Naive thymus-derived CD4-positive, alpha-beta T cell (primary cell): ENCODE measurements at regions of chr22 and their contacts with region 1.

Region 1: GRCh38 chr22:44684506-44685383 is 17.3 kb upstream of the PRR5 start:
- DNase-seq: peak; percentile 58 to 84 (median 78)
- ATAC-seq: peak; percentile 95
- H3K4me3 ChIP-seq: no peak overlapping the region
- H3K4me3 Mint-ChIP-seq: peak overlapping the region in 8 of 10 donors; percentile 36 to 76 (median 52)
- H3K27ac ChIP-seq: no peak overlapping the region
- H3K27ac Mint-ChIP-seq: peak overlapping the region in 8 of 9 donors; percentile 43 to 84 (median 67)
- H3K4me1 ChIP-seq: peaks cover 16 to 39% of the 10 kb centered on the region in 2 donors
- H3K4me1 Mint-ChIP-seq: peaks cover 20 to 55% (median 37%) of the 10 kb centered on the region in 7 donors
- H3K27me3 ChIP-seq: no peaks in the 10 kb centered on the region
- H3K27me3 Mint-ChIP-seq: no peaks in the 10 kb centered on the region

Region 2: GRCh38 chr22:43993027-43993760 is 691.6 kb before region 1 on chr22:
- CTCF ChIA-PET with region 1: no interaction called
- POLR2A ChIA-PET with region 1: no interaction called
- intact Hi-C with region 1: loop called in 1 of 2 experiments (anchors 10 kb)
- DNase-seq: peak; percentile 14 to 60 (median 52)
- ATAC-seq: peak; percentile 84
- H3K4me3 ChIP-seq: no peak overlapping the region
- H3K4me3 Mint-ChIP-seq: peak overlapping the region in 2 of 10 donors; percentile 42 to 54
- H3K27ac ChIP-seq: no peak overlapping the region
- H3K27ac Mint-ChIP-seq: peak overlapping the region in 7 of 9 donors; percentile 22 to 93 (median 68)
- H3K4me1 ChIP-seq: peaks cover 0 to 6% of the 10 kb centered on the region in 2 donors
- H3K4me1 Mint-ChIP-seq: peaks cover 26 to 42% (median 33%) of the 10 kb centered on the region in 7 donors
- H3K27me3 ChIP-seq: no peaks in the 10 kb centered on the region
- H3K27me3 Mint-ChIP-seq: no peaks in the 10 kb centered on the region

Region 3: DNA sequence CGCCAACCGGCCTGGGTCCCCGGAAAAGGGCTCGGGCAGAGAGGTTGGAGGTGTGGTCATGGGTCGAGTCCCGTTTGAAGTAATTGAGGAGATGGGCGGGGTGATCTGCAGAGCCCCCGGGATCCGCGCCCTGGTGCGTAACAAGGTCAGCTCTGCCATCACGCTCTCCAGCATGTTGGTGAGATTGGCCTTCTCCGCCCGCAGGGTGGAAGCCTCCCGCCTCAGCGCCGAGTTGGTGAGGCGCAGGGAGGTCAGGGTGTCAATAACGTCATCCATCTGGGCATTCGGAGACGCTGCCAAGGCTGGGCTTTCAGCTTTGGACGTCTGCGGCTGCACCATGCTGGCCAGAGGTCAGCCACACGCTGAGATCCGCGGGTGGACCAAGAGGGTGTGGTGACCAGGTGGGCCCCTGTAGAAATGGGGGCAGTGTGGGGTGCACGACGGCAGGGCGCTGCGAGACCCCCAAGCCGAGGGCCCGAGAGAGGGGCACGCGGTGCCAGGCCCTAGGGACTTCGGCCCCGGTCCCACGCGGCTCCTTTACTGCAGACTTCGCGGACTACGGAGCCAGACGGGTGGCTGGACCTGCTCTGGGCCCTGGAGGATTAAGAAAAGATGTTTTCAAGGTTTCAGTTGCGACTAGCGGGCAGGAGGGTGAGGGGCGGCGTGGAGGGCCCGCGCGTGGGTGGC is 187.4 kb before region 1 on chr22:
- CTCF ChIA-PET with region 1: no interaction called
- POLR2A ChIA-PET with region 1: no interaction called
- intact Hi-C with region 1: loop called in 1 of 2 experiments (anchors 5 kb)
- DNase-seq: peak in 2 of 9 donors; percentile 8 to 11
- ATAC-seq: no peak
- H3K4me3 ChIP-seq: peak overlapping the region; percentile 61
- H3K4me3 Mint-ChIP-seq: peak overlapping the region; percentile 42 to 89 (median 72)
- H3K27ac ChIP-seq: peak overlapping the region; percentile 80
- H3K27ac Mint-ChIP-seq: peak overlapping the region; percentile 15 to 91 (median 73)
- H3K4me1 ChIP-seq: peaks cover 4 to 28% of the 10 kb centered on the region in 2 donors
- H3K4me1 Mint-ChIP-seq: peaks cover 5 to 47% (median 29%) of the 10 kb centered on the region in 7 donors
- H3K27me3 ChIP-seq: no peaks in the 10 kb centered on the region
- H3K27me3 Mint-ChIP-seq: peaks cover 0 to 9% (median 5%) of the 10 kb centered on the region in 5 donors

Region 4: DNA sequence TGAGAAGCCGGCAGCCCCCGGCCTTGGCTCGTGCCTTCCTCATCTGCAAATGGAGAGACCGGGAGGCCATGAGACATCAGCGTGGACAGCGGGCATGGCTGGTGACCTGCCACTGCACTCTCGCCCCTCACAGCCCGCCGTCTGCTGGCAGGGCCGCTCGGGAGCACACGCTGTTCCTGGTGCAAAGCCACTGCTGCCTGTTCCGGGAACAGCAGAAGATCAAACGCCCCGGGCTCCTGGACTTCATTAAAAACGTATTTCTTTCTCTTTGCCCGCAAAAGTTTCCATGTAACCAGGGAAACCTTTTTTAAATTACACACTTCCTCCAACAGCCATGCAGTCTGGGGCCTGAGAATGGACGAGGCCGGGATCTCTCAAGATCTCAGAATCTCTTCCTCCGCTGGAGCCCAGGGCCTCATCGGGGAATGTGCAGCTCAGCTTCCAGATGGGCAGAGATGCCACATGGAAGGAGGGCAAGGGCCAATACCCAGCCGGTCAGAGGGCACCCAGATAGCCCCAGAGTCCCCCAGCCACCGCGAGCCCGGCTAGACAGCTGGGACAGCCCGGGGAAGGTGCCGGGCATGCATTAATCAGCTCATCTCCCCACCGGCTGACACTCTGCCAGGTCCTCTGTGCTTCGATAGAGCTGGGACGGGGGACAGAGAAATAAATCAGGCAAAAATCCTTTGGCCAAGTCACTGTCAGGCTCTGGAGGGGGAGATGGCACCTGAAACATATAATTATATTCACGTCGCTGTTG is 45.6 kb before region 1 on chr22:
- CTCF ChIA-PET with region 1: no interaction called
- POLR2A ChIA-PET with region 1: no interaction called
- intact Hi-C with region 1: no loop called
- DNase-seq: no peak
- ATAC-seq: no peak
- H3K4me3 ChIP-seq: no peak overlapping the region
- H3K4me3 Mint-ChIP-seq: no peak overlapping the region
- H3K27ac ChIP-seq: no peak overlapping the region
- H3K27ac Mint-ChIP-seq: no peak overlapping the region
- H3K4me1 ChIP-seq: peaks cover 0 to 8% of the 10 kb centered on the region in 2 donors
- H3K4me1 Mint-ChIP-seq: peaks cover 0 to 7% (median 0%) of the 10 kb centered on the region in 7 donors
- H3K27me3 ChIP-seq: no peaks in the 10 kb centered on the region
- H3K27me3 Mint-ChIP-seq: peaks cover 0 to 6% (median 0%) of the 10 kb centered on the region in 5 donors

Region 5: DNA sequence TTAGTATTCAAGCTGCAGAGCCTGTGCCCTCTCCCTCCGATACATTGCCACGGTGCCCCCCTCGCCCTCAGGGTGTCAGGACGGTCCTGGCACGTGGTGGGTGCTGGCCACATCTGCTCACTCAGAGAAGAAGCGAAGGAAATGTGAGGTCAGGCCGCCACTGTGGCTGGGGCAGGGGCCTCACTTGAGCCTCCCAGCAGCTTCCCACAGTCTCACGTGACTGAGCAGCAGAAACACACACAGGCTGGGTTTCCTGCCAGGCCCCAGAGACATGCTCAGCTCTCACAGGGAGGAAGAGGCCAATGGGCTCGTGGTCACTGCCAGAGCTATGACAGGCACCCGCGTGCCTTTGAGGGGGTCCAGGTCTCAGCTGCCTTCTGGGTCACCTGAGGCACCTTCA is 20.6 kb before region 1 on chr22:
- CTCF ChIA-PET with region 1: interaction called, 10 read pairs
- POLR2A ChIA-PET with region 1: interaction called, 7 read pairs
- intact Hi-C with region 1: loop called (anchors 1 kb)
- DNase-seq: peak in 6 of 9 donors; percentile 27 to 49 (median 34)
- ATAC-seq: peak; percentile 58
- H3K4me3 ChIP-seq: peak overlapping the region; percentile 30
- H3K4me3 Mint-ChIP-seq: peak overlapping the region; percentile 33 to 77 (median 56)
- H3K27ac ChIP-seq: peak overlapping the region; percentile 61
- H3K27ac Mint-ChIP-seq: peak overlapping the region; percentile 68 to 91 (median 83)
- H3K4me1 ChIP-seq: peaks cover 43 to 46% of the 10 kb centered on the region in 2 donors
- H3K4me1 Mint-ChIP-seq: peaks cover 37 to 56% (median 47%) of the 10 kb centered on the region in 7 donors
- H3K27me3 ChIP-seq: no peaks in the 10 kb centered on the region
- H3K27me3 Mint-ChIP-seq: peaks cover 0 to 9% (median 0%) of the 10 kb centered on the region in 5 donors

Region 6: DNA sequence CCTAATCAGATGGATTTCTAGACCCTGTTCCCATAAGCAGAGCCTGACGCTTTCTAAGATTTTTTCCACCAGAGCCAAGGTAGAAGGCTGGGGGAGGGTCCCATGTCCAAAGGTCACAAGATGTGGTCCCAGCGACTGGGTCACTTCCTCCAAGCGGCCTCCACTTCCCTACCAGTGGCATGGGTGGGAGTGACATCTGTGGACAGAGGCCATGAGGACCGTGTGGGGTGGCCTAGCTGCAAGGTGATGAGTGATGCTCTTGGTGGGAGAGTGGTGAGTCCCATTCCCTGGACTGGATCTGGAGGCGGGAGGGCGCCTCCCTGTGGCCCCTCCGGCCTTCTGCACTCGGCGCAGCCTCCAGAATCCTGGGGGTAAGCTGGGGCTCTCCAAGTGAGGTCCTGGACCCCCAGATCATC is 15.2 kb before region 1 on chr22:
- CTCF ChIA-PET with region 1: interaction called, 10 read pairs
- POLR2A ChIA-PET with region 1: interaction called, 7 read pairs
- intact Hi-C with region 1: loop called (anchors 1 kb)
- DNase-seq: no peak
- ATAC-seq: no peak
- H3K4me3 ChIP-seq: peak overlapping the region; percentile 54
- H3K4me3 Mint-ChIP-seq: peak overlapping the region; percentile 42 to 86 (median 78)
- H3K27ac ChIP-seq: peak overlapping the region; percentile 50
- H3K27ac Mint-ChIP-seq: peak overlapping the region in 6 of 9 donors; percentile 21 to 83 (median 44)
- H3K4me1 ChIP-seq: peaks cover 37 to 46% of the 10 kb centered on the region in 2 donors
- H3K4me1 Mint-ChIP-seq: peaks cover 28 to 61% (median 49%) of the 10 kb centered on the region in 7 donors
- H3K27me3 ChIP-seq: no peaks in the 10 kb centered on the region
- H3K27me3 Mint-ChIP-seq: peaks cover 0 to 19% (median 0%) of the 10 kb centered on the region in 5 donors

Region 7: GRCh38 chr22:44701824-44702478 is 17.2 kb after region 1 on chr22 and contains the start of gene PRR5:
- CTCF ChIA-PET with region 1: interaction called, 4 read pairs
- POLR2A ChIA-PET with region 1: no interaction called
- intact Hi-C with region 1: loop called (anchors 1 kb)
- DNase-seq: peak; percentile 73 to 85 (median 81)
- ATAC-seq: peak; percentile 94
- H3K4me3 ChIP-seq: peak within 1 kb of the TSS; percentile 64
- H3K4me3 Mint-ChIP-seq: peak within 1 kb of the TSS; percentile 72 to 83 (median 78)
- H3K27ac ChIP-seq: peak within 1 kb of the TSS; percentile 68
- H3K27ac Mint-ChIP-seq: peak within 1 kb of the TSS; percentile 74 to 91 (median 83)
- H3K4me1 ChIP-seq: peaks cover 21 to 23% of the 10 kb centered on the region in 2 donors
- H3K4me1 Mint-ChIP-seq: peaks cover 5 to 31% (median 17%) of the 10 kb centered on the region in 7 donors
- H3K27me3 ChIP-seq: no peaks in the 10 kb centered on the region
- H3K27me3 Mint-ChIP-seq: peaks cover 0 to 9% (median 0%) of the 10 kb centered on the region in 5 donors
- total RNA-seq, gene PRR5: 19.6 to 49.1 (median 44.4) TPM